Activated CD4-positive, alpha-beta T cell treated with anti-CD3 and anti-CD28 coated beads, Interleukin-2, amount 10 ng/mL, durations not matched to agents 7 days and 5 days (primary cell): ENCODE measurements at regions of chr5 and their contacts with region 1.

Region 1: GRCh38 chr5:132963175-132964104 is at the start of gene AFF4:
- DNase-seq: peak; percentile 87
- H3K4me3 Mint-ChIP-seq: peak within 1 kb of the TSS; percentile 95
- H3K27ac Mint-ChIP-seq: peak within 1 kb of the TSS; percentile 99
- H3K4me1 Mint-ChIP-seq: peaks cover 23% of the 10 kb centered on the region
- H3K27me3 Mint-ChIP-seq: no peaks in the 10 kb centered on the region
- total RNA-seq, gene AFF4: 33.9 to 40.0 TPM

Region 2: GRCh38 chr5:133051580-133052332 is 88.3 kb after region 1 on chr5 and contains the start of gene HSPA4:
- CTCF ChIA-PET with region 1: interaction called, 3 read pairs
- POLR2A ChIA-PET with region 1: interaction called, 10 read pairs
- DNase-seq: peak; percentile 99
- H3K4me3 Mint-ChIP-seq: peak within 1 kb of the TSS; percentile 96
- H3K27ac Mint-ChIP-seq: peak within 1 kb of the TSS; percentile 100
- H3K4me1 Mint-ChIP-seq: peaks cover 51% of the 10 kb centered on the region
- H3K27me3 Mint-ChIP-seq: no peaks in the 10 kb centered on the region
- total RNA-seq, gene HSPA4: 89.5 to 95.4 TPM